Activated T-helper 2 cell treated with anti-CD3 and anti-CD28 coated beads, Interferon-gamma antibody, Interleukin-2, Interleukin-4, amounts not matched to agents 10 μg/mL and 5 μg/mL and 100 μg/mL, durations not matched to agents 14 hours and 24 hours and 36 hours (primary cell): ENCODE measurements at regions of chr11 and their contacts with region 1.

Region 1: DNA sequence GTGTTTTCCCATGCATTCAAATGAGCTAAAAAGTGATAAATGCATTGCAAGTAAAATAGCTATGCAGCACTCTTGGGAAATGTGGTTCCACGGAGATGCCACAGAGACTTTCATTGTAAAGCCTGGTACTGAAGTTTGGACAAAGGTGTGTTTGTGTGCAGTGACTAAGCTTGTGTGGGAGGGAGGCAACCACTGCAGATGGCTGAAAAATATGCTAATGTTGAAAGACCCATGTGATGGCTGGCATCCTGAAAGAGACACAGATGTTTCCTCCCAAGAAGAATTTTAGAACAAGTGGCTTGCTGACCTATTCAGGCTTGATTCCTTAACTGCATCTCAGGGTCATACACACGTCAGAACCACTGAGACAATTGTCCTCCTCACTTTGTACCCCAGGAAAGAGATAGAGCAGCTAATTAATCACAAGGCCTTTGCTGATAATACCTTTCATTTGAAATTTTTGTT is 73.8 kb downstream of the FAM76B start:
- DNase-seq: no peak
- H3K4me3 Mint-ChIP-seq: peak overlapping the region; percentile 19
- H3K27ac Mint-ChIP-seq: peak overlapping the region; percentile 82
- H3K4me1 Mint-ChIP-seq: peaks cover 60% of the 10 kb centered on the region
- H3K27me3 Mint-ChIP-seq: no peaks in the 10 kb centered on the region

Region 2: GRCh38 chr11:95680169-95680929 is 35.5 kb before region 1 on chr11:
- intact Hi-C with region 1: loop called (anchors 5 kb)
- DNase-seq: no peak
- H3K4me3 Mint-ChIP-seq: no peak overlapping the region
- H3K27ac Mint-ChIP-seq: peak overlapping the region; percentile 71
- H3K4me1 Mint-ChIP-seq: peaks cover 87% of the 10 kb centered on the region
- H3K27me3 Mint-ChIP-seq: no peaks in the 10 kb centered on the region

Region 3: GRCh38 chr11:95751515-95751914 is 35.7 kb after region 1 on chr11:
- intact Hi-C with region 1: loop called (anchors 5 kb)
- DNase-seq: no peak
- H3K4me3 Mint-ChIP-seq: no peak overlapping the region
- H3K27ac Mint-ChIP-seq: no peak overlapping the region
- H3K4me1 Mint-ChIP-seq: no peaks in the 10 kb centered on the region
- H3K27me3 Mint-ChIP-seq: peaks cover 3% of the 10 kb centered on the region

Region 4: GRCh38 chr11:95764267-95764898 is 48.6 kb after region 1 on chr11:
- intact Hi-C with region 1: loop called (anchors 2 kb)
- DNase-seq: no peak
- H3K4me3 Mint-ChIP-seq: no peak overlapping the region
- H3K27ac Mint-ChIP-seq: no peak overlapping the region
- H3K4me1 Mint-ChIP-seq: peaks cover 15% of the 10 kb centered on the region
- H3K27me3 Mint-ChIP-seq: no peaks in the 10 kb centered on the region